ENCODE measurements at regions of chr16 and their contacts with region 1.

Region 1: GRCh38 chr16:57300387-57301125 is 16.1 kb upstream of the PLLP start:
- DNase-seq: peak; percentile 99
- ATAC-seq: peak; percentile 96
- H3K4me3 ChIP-seq: peak overlapping the region in 1 of 2 donors; percentile 18
- H3K27ac ChIP-seq: no peak overlapping the region
- H3K4me1 ChIP-seq: peaks cover 0 to 3% of the 10 kb centered on the region in 2 donors
- H3K27me3 ChIP-seq: no peaks in the 10 kb centered on the region

Region 2: GRCh38 chr16:57084257-57084770 is 216.2 kb before region 1 on chr16:
- intact Hi-C with region 1: loop called in 1 of 2 experiments (anchors 10 kb)
- DNase-seq: peak; percentile 79 to 87
- ATAC-seq: peak; percentile 93
- H3K4me3 ChIP-seq: no peak overlapping the region
- H3K27ac ChIP-seq: no peak overlapping the region
- H3K4me1 ChIP-seq: no peaks in the 10 kb centered on the region
- H3K27me3 ChIP-seq: no peaks in the 10 kb centered on the region

Region 3: DNA sequence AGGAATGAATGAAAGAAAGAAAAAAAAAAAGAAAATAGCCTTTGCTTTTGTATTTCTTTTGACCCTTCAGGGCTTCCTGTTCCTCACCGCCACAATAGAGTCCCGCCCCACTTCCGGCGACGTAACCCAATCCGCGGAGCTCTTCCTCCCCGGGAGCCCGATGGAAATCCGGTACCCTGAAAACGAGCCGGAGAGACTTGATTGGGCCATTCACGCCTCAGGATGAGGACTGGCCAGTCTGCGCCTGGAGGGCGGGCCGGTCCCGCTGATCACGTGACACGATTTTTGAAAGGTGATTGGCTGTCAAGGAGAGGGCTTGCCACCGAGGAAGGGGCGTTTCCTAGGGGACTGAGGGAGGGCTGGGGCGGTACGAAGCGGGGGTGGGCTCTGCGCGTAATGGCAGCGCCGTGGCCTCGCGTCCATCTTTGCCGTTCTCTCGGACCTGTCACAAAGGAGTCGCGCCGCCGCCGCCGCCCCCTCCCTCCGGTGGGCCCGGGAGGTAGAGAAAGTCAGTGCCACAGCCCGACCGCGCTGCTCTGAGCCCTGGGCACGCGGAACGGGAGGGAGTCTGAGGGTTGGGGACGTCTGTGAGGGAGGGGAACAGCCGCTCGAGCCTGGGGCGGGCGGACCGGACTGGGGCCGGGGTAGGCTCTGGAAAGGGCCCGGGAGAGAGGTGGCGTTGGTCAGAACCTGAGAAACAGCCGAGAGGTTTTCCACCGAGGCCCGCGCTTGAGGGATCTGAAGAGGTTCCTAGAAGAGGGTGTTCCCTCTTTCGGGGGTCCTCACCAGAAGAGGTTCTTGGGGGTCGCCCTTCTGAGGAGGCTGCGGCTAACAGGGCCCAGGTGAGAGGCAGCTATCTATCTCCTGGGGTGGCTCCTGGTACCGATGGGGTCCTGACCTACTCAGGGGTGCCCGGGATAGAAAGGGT is 114.3 kb before region 1 on chr16 and contains the starts of genes PSME3IP1 and RSPRY1:
- intact Hi-C with region 1: loop called (anchors 5 kb)
- DNase-seq: peak; percentile 98 to 99
- ATAC-seq: peak; percentile 99
- H3K4me3 ChIP-seq: peak within 1 kb of the TSS; percentile 58 to 88
- H3K27ac ChIP-seq: peak within 1 kb of the TSS; percentile 79 to 88
- H3K4me1 ChIP-seq: peaks cover under 1 to 6% of the 10 kb centered on the region in 2 donors
- H3K27me3 ChIP-seq: no peaks in the 10 kb centered on the region
- total RNA-seq, gene PSME3IP1: 59.8 to 85.7 TPM
- total RNA-seq, gene RSPRY1: 30.9 to 32.5 TPM

Region 4: GRCh38 chr16:57372372-57373116 is 72.0 kb after region 1 on chr16 and contains the start of gene CX3CL1:
- intact Hi-C with region 1: loop called (anchors 1 kb)
- DNase-seq: peak; percentile 80 to 92
- ATAC-seq: peak; percentile 93
- H3K4me3 ChIP-seq: peak within 1 kb of the TSS; percentile 52 to 69
- H3K27ac ChIP-seq: peak within 1 kb of the TSS; percentile 44 to 79
- H3K4me1 ChIP-seq: peaks cover 0 to under 1% of the 10 kb centered on the region in 2 donors
- H3K27me3 ChIP-seq: no peaks in the 10 kb centered on the region
- total RNA-seq, gene CX3CL1: 45.5 to 47.5 TPM

Region 5: GRCh38 chr16:57386381-57386951 is 85.9 kb after region 1 on chr16:
- intact Hi-C with region 1: no loop called
- DNase-seq: peak in 1 of 2 donors; percentile 50
- ATAC-seq: no peak
- H3K4me3 ChIP-seq: no peak overlapping the region
- H3K27ac ChIP-seq: no peak overlapping the region
- H3K4me1 ChIP-seq: peaks cover 0 to 2% of the 10 kb centered on the region in 2 donors
- H3K27me3 ChIP-seq: no peaks in the 10 kb centered on the region

Region 6: GRCh38 chr16:57519796-57520360 is 219.3 kb after region 1 on chr16:
- intact Hi-C with region 1: loop called in 1 of 2 experiments (anchors 5 kb)
- DNase-seq: peak; percentile 80 to 94
- ATAC-seq: peak; percentile 77
- H3K4me3 ChIP-seq: no peak overlapping the region
- H3K27ac ChIP-seq: no peak overlapping the region
- H3K4me1 ChIP-seq: no peaks in the 10 kb centered on the region
- H3K27me3 ChIP-seq: no peaks in the 10 kb centered on the region